ENCODE measurements at regions of chr16 and their contacts with region 1.

Region 1: DNA sequence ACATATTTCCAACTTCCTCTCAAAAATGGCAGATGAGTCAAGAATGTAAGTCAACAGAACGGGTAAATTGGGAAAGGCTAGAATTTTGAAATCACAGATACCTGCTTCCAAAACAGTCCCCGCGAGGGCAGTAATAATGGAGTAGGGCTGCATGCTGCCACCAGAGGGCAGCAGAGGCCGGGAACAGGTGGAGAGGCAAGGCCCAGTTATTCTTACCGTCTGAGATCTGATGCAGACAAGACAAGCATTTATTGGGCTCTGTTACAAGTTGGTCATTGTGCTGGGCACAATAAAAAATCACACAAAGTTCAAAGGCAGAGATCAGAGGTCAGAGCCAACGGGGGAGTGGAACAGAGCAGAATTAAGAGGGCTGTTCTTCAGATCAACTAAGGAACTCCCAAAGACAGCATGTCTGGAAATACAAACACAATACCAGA is 8.8 kb upstream of the MLKL start:
- DNase-seq: peak; percentile 61 to 87 (median 80)
- H3K4me3 ChIP-seq: no peak overlapping the region
- H3K27ac ChIP-seq: no peak overlapping the region
- H3K4me1 ChIP-seq: no peaks in the 10 kb centered on the region
- H3K27me3 ChIP-seq: no peaks in the 10 kb centered on the region
- CTCF ChIP-seq: peak; percentile 80 to 91 (median 82)
- EP300 ChIP-seq: no peak
- POLR2A ChIP-seq: no peak

Region 2: GRCh38 chr16:74749291-74750055 is 40.0 kb after region 1 on chr16:
- intact Hi-C with region 1: no loop called
- DNase-seq: no peak
- H3K4me3 ChIP-seq: no peak overlapping the region
- H3K27ac ChIP-seq: no peak overlapping the region
- H3K4me1 ChIP-seq: no peaks in the 10 kb centered on the region
- H3K27me3 ChIP-seq: no peaks in the 10 kb centered on the region
- CTCF ChIP-seq: no peak
- EP300 ChIP-seq: no peak
- POLR2A ChIP-seq: no peak

Region 3: GRCh38 chr16:74862741-74863244 is 153.3 kb after region 1 on chr16:
- intact Hi-C with region 1: loop called in 3 of 4 experiments (anchors 5 kb)
- DNase-seq: no peak
- H3K4me3 ChIP-seq: no peak overlapping the region
- H3K27ac ChIP-seq: no peak overlapping the region
- H3K4me1 ChIP-seq: no peaks in the 10 kb centered on the region
- H3K27me3 ChIP-seq: no peaks in the 10 kb centered on the region
- CTCF ChIP-seq: peak; percentile 61 to 65 (median 61)
- EP300 ChIP-seq: no peak
- POLR2A ChIP-seq: no peak

Region 4: DNA sequence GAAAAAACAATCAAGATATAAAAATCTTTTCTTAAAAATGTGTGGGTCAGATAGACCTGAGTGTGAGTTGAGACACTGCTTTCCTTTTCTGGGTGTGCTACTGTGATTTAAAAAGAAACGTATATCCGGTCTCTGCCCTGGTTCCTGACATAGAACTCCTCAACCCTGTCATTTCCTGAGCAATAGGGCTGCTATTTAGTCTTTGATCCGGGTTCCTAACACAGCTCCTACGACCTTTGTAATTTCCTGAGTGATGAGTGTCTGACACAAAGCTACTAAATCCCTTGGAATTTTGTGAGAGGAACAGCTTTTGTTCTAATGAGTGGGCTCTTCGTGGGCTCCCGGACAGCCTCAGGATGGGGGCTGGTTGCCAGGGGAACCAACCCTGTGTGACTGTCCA is 159.0 kb after region 1 on chr16:
- intact Hi-C with region 1: loop called in 3 of 4 experiments (anchors 5 kb)
- DNase-seq: no peak
- H3K4me3 ChIP-seq: no peak overlapping the region
- H3K27ac ChIP-seq: no peak overlapping the region
- H3K4me1 ChIP-seq: no peaks in the 10 kb centered on the region
- H3K27me3 ChIP-seq: no peaks in the 10 kb centered on the region
- CTCF ChIP-seq: no peak
- EP300 ChIP-seq: no peak
- POLR2A ChIP-seq: no peak

Region 5: GRCh38 chr16:75110637-75111513 is 401.4 kb after region 1 on chr16:
- intact Hi-C with region 1: loop called in 1 of 4 experiments (anchors 10 kb)
- DNase-seq: peak; percentile 87 to 95 (median 94)
- H3K4me3 ChIP-seq: peak overlapping the region; percentile 13
- H3K27ac ChIP-seq: peak overlapping the region; percentile 14 to 76
- H3K4me1 ChIP-seq: peaks cover 36% of the 10 kb centered on the region
- H3K27me3 ChIP-seq: no peaks in the 10 kb centered on the region
- CTCF ChIP-seq: peak; percentile 76 to 91 (median 91)
- EP300 ChIP-seq: no peak
- POLR2A ChIP-seq: peak; percentile 8

Measured in ovary (tissue), 10 donors.